ENCODE measurements at regions of chr7 and their contacts with region 1.

Region 1: GRCh38 chr7:73822319-73823076 is 8.3 kb upstream of the CLDN4 start:
- DNase-seq: no peak
- ATAC-seq: no peak
- H3K4me3 Mint-ChIP-seq: no peak overlapping the region
- H3K27ac Mint-ChIP-seq: no peak overlapping the region
- H3K4me1 Mint-ChIP-seq: peaks cover 32% of the 10 kb centered on the region
- H3K27me3 Mint-ChIP-seq: peaks cover 8% of the 10 kb centered on the region
- CTCF ChIP-seq: no peak

Region 2: GRCh38 chr7:73351447-73352167 is 470.9 kb before region 1 on chr7:
- CTCF ChIA-PET with region 1: no interaction called
- POLR2A ChIA-PET with region 1: interaction called, 10 read pairs
- DNase-seq: no peak
- ATAC-seq: peak; percentile 53
- H3K4me3 Mint-ChIP-seq: no peak overlapping the region
- H3K27ac Mint-ChIP-seq: peak overlapping the region; percentile 91
- H3K4me1 Mint-ChIP-seq: peaks cover 23% of the 10 kb centered on the region
- H3K27me3 Mint-ChIP-seq: no peaks in the 10 kb centered on the region
- CTCF ChIP-seq: no peak

Region 3: GRCh38 chr7:73851410-73852234 is 29.1 kb after region 1 on chr7:
- CTCF ChIA-PET with region 1: interaction called, 10 read pairs
- POLR2A ChIA-PET with region 1: no interaction called
- DNase-seq: no peak
- ATAC-seq: no peak
- H3K4me3 Mint-ChIP-seq: no peak overlapping the region
- H3K27ac Mint-ChIP-seq: no peak overlapping the region
- H3K4me1 Mint-ChIP-seq: peaks cover 17% of the 10 kb centered on the region
- H3K27me3 Mint-ChIP-seq: peaks cover 17% of the 10 kb centered on the region
- CTCF ChIP-seq: no peak

Region 4: DNA sequence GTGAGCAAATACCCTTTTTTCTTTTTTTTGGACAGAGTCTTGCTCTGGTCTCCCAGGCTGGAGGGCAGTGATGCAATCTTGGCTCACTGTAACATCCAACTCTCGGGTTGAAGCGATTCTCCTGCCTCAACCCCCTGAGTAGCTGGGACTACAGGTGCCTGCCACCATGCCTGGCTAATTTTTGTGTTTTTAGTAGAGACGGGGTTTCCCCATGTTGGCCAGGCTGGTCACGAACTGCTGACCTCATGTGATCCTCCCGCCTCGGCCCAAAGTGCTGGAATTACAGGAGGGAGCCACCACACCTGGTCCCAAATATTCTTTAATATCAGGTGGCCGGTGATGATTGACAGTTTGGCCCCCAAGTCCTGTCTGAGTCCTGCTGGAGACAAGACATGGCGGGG is 393.9 kb after region 1 on chr7:
- CTCF ChIA-PET with region 1: no interaction called
- POLR2A ChIA-PET with region 1: no interaction called
- DNase-seq: no peak
- ATAC-seq: no peak
- H3K4me3 Mint-ChIP-seq: no peak overlapping the region
- H3K27ac Mint-ChIP-seq: no peak overlapping the region
- H3K4me1 Mint-ChIP-seq: no peaks in the 10 kb centered on the region
- H3K27me3 Mint-ChIP-seq: no peaks in the 10 kb centered on the region
- CTCF ChIP-seq: no peak